Dorsolateral prefrontal cortex (tissue), 120 donors: ENCODE measurements at regions of chr16 and their contacts with region 1.

Region 1: DNA sequence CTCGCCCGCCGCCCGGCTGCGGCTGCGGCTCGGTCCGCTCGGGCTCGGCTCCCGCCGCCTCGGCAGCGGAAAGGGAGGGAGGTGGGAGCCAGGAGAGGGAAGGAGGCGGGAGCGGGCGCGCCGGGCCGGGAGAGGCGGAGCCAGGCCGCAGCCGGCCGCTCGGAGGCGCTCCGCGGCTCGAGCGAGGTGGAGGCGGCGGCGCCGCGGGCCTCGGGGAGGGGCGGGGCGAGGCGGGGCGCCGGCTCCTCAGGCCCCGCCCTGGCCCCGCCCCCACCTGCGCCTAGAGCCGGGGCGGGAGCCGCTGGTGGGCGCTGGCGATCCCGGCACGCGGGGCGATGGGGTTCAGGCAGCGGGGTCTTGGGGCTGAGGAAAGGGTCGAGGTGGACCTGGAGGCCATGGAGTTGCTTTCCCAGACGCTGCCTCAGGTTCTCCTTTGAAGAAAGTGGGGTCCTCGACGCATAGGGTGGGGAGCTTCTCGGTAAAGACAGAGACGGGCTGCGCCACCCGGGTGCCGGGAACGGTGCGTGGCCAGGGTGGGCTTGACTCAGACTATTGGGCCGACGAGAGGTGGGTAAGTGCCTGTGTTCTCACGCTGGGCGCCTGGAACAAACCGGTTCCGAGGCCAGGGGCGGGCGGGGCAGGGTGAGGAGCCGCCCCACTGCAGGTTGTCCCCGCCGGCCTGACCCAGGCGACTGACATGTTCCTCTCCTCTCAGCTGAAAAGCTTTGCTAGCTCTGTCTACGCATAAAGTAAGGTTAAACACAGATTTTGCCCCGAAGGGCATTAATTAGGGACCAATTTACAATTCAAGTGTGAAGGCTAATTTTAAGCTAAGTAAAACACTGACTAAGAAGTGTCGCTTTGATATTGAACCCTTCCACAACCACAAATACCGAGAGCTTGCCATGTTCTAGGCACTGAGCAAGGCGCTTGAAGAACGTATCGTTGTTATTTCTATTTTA is at the start of gene CMTM4:
- DNase-seq: peak; percentile 59 to 92 (median 80)
- H3K4me3 ChIP-seq: peak within 1 kb of the TSS; percentile 64 to 95 (median 84)
- H3K27ac ChIP-seq: peak within 1 kb of the TSS; percentile 25 to 95 (median 84)
- H3K27me3 ChIP-seq: no peaks in the 10 kb centered on the region
- CTCF ChIP-seq: peak in 29 of 56 donors; percentile 4 to 57 (median 32)
- total RNA-seq, gene CMTM4: 82.8 to 193 (median 119) TPM

Region 2: DNA sequence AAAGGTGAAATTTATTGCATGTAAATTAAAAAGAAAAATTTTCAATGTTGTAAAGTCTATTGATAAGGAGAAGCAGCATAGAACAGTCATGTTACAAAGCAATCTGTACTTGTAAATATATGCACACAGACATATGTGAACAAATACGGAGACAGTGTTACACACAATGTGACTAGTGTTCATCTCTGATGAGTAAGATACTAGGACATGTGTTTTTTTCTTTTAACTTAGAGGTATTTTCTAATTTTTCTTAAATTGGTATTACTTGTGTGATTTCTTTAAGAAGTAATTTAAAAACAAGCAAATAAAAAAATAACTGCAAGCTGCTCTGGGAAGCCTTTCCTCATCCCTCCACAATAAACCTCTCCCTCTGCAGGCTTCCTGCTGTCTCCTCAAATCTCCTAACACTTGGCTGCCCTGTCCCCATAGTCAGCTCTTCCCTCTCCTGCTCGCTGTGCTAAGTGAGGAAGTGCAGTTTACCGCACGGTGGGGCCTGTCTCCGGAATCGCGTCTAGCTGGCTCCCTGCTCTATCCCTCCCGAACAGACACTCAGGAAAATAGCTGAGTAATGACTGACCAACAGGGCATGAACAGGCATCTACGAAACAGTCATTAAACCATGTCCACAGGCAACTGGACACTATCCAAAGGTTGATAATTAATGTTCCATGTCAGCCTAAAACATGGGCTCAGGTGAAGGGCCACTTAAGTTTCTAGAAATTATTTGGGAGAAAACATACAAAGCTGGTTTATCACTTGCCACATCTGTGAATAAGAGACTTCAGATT is 36.3 kb before region 1 on chr16:
- intact Hi-C with region 1: loop called (anchors 2 to 5 kb)
- DNase-seq: peak; percentile 31 to 77 (median 72)
- H3K4me3 ChIP-seq: peak overlapping the region in 22 of 59 donors; percentile 0 to 39 (median 12)
- H3K27ac ChIP-seq: peak overlapping the region in 57 of 59 donors; percentile 7 to 89 (median 78)
- H3K27me3 ChIP-seq: no peaks in the 10 kb centered on the region
- CTCF ChIP-seq: peak in 43 of 56 donors; percentile 12 to 55 (median 33)

Region 3: GRCh38 chr16:66728117-66728787 is 31.3 kb after region 1 on chr16:
- intact Hi-C with region 1: no loop called
- DNase-seq: peak in 1 of 10 donors; percentile 45
- H3K4me3 ChIP-seq: no peak overlapping the region
- H3K27ac ChIP-seq: peak overlapping the region in 53 of 59 donors; percentile 4 to 80 (median 59)
- H3K27me3 ChIP-seq: no peaks in the 10 kb centered on the region
- CTCF ChIP-seq: peak; percentile 67 to 92 (median 82)